PC-3 (cell line): ENCODE measurements at regions of chr3 and their contacts with region 1.

Region 1: GRCh38 chr3:170414202-170414663 is 4.4 kb upstream of the CLDN11 start:
- DNase-seq: peak; percentile 85
- ATAC-seq: peak; percentile 39
- H3K4me3 ChIP-seq: peak overlapping the region; percentile 23; the same call in 1 of the 2 replicates
- H3K27ac ChIP-seq: no peak overlapping the region
- H3K4me1 ChIP-seq: peaks cover 15% of the 10 kb centered on the region
- H3K27me3 ChIP-seq: no peaks in the 10 kb centered on the region
- CTCF ChIP-seq: peak; percentile 98

Region 2: DNA sequence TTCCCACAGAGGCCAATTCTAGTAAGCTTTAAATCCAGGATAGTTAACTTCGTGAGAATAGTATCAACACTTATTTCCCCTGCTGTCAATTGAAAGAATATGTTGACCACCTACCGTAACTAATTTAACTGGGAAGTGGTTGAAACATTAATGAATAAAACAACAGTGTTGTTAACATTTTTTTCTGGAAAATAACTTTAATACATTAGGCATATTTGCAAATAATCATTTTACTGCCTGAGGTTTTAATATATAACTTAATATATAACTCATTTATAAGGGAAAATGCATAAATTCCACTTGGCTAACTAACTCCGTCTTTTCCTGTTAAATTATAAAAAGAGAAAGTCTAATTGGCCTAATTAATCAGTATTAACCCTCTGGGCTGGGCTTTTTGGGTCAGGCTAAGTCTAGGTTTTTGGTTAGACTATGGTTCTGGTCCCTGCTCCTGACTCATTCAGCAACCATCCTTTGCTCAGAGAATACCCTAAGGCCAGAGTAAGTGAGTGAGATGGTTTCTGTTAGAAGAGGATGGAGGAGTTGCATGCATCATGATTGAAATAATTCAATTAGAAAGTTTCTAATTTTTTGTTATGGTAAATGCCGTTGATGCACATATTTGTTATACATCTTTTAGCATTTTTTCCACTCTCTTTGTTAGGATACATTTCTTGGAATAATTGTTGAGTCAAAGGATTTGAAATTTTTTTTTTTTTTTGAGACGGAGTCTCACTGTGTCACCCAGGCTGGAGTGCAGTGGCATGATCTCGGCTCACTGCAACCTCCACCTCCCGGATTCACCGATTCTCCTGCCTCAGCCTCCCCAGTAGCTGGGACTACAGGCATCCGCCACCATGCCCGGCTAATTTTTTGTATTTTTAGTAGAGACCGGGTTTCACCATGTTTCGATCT is 67.5 kb before region 1 on chr3:
- CTCF ChIA-PET with region 1: no interaction called
- POLR2A ChIA-PET with region 1: no interaction called
- intact Hi-C with region 1: no loop called
- DNase-seq: peak; percentile 59
- ATAC-seq: peak; percentile 89
- H3K4me3 ChIP-seq: no peak overlapping the region
- H3K27ac ChIP-seq: no peak overlapping the region
- H3K4me1 ChIP-seq: peaks cover 7% of the 10 kb centered on the region; the same call in 1 of the 2 replicates
- H3K27me3 ChIP-seq: no peaks in the 10 kb centered on the region
- CTCF ChIP-seq: no peak

Region 3: DNA sequence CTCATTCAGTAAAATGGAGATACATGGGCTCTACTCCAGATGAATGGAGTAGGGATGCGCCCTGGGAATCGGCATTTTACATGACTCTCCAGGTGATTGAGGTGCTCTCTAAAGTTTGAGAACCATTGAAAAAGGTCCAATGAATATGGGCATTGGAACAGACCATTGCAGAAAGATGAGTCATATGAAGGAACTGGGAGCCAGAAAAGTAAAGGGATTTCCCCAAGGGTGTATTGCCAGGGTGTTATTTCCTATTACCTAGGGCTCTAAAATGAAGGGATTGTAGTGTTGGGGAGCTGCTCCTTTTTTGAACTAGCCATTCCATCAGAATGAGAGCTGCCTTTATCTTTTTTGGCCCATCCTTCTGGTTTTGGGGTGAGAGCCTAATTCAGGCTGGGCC is 26.1 kb after region 1 on chr3:
- CTCF ChIA-PET with region 1: no interaction called
- POLR2A ChIA-PET with region 1: no interaction called
- intact Hi-C with region 1: no loop called
- DNase-seq: peak; percentile 46
- ATAC-seq: peak; percentile 71
- H3K4me3 ChIP-seq: no peak overlapping the region
- H3K27ac ChIP-seq: no peak overlapping the region
- H3K4me1 ChIP-seq: peaks cover 7% of the 10 kb centered on the region; the same call in 1 of the 2 replicates
- H3K27me3 ChIP-seq: no peaks in the 10 kb centered on the region
- CTCF ChIP-seq: no peak

Region 4: DNA sequence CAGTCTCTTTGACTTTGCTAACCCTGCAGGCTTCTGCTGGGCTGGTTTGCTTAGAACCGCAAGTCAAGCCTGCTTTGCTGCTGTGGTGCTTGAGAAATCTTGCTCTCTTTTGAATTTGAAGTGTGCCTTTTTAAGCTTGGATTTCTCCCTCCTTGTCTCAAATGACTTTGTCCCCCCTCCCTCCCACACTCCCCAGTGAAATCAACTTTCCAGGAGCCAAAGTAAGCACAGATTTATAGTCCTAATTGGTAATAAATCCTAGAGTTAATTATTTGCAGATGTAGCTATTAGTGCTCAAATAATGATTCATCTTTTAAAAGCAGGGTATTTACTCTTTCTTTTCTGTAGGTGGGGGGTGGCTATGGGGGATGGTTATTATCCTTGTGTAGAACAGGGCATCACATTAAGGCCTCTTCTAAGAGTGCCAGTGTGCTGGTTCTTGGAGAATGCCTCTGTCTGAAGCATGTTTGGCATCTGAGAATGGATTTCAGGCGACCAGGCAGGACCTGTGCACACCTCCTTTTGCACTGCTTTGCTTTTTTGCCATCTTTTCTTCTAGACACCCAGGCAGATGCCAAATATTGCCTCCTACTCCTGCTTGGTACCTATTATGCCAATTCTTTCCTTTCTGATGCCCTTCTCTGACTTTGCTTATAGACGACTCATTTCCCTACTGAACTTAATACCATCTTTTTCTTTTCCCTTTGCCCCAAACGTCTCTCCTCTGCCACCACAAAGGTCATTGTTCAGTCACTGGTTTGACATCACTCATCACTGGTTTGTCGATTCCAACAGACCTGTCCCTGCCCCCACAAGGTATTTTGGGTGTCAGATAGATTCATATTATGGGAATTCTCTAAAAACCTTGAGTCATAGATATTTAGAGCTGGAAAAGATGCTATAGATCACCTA is 55.2 kb after region 1 on chr3:
- CTCF ChIA-PET with region 1: interaction called, 4 read pairs
- POLR2A ChIA-PET with region 1: no interaction called
- intact Hi-C with region 1: loop called (anchors 2 kb)
- DNase-seq: peak; percentile 68
- ATAC-seq: peak; percentile 72
- H3K4me3 ChIP-seq: no peak overlapping the region; the same call in 1 of the 2 replicates
- H3K27ac ChIP-seq: peak overlapping the region; percentile 21
- H3K4me1 ChIP-seq: peaks cover 56% of the 10 kb centered on the region
- H3K27me3 ChIP-seq: no peaks in the 10 kb centered on the region
- CTCF ChIP-seq: no peak

Region 5: DNA sequence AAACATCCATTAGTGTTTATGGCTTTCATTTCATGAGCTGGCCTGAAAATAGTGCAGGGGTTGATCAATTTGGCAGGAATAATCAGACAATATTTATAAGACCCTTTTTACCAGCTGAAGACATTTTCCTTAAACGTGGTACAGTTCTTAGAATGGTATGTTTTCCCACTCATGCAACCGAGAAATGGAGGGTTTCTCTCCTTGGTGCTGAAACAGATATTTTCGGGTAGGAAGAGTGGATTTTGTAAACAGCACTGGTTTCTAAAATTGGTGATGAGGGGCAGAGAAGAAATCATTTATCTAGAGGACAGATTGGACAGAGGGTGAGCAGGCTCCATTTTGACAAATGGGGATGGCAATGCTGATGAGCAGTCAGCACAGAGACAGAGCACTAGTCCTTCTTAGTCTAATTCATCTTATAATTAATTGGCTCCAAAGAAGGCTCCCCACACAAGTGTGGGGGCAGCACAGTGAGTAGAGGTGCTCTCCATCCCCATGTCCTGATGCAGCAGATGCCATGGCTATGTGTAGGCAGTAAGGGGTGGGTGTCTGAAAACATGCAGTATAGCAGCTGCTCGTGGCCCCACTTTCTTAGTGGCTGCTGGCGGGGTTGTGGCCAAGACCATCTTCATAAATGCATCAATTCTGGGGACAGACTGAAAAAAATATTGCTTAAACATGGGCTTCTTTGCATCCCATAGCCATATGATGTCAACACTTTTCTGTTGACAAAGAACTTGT is 189.7 kb after region 1 on chr3:
- CTCF ChIA-PET with region 1: no interaction called
- POLR2A ChIA-PET with region 1: no interaction called
- intact Hi-C with region 1: loop called (anchors 10 kb)
- DNase-seq: no peak
- ATAC-seq: no peak
- H3K4me3 ChIP-seq: no peak overlapping the region
- H3K27ac ChIP-seq: no peak overlapping the region
- H3K4me1 ChIP-seq: 0 out of 2 replicates have a peak, but pooled peaks cover 3% of the 10 kb centered on the region
- H3K27me3 ChIP-seq: no peaks in the 10 kb centered on the region
- CTCF ChIP-seq: no peak

Region 6: GRCh38 chr3:170740726-170741591 is 326.7 kb after region 1 on chr3:
- CTCF ChIA-PET with region 1: interaction called, 3 read pairs
- POLR2A ChIA-PET with region 1: no interaction called
- intact Hi-C with region 1: loop called (anchors 5 kb)
- DNase-seq: peak; percentile 93
- ATAC-seq: peak; percentile 46
- H3K4me3 ChIP-seq: peak overlapping the region; percentile 23; the same call in 1 of the 2 replicates
- H3K27ac ChIP-seq: peak overlapping the region; percentile 90
- H3K4me1 ChIP-seq: peaks cover 70% of the 10 kb centered on the region
- H3K27me3 ChIP-seq: no peaks in the 10 kb centered on the region
- CTCF ChIP-seq: no peak